Activated naive CD4-positive, alpha-beta T cell treated with anti-CD3 and anti-CD28 coated beads for 36 hours (primary cell): ENCODE measurements at regions of chr3 and their contacts with region 1.

Region 1: GRCh38 chr3:98329392-98330124 is 24.1 kb upstream of the OR5K4 start:
- DNase-seq: peak; percentile 57
- H3K4me3 Mint-ChIP-seq: no peak overlapping the region
- H3K27ac Mint-ChIP-seq: no peak overlapping the region
- H3K4me1 Mint-ChIP-seq: no peaks in the 10 kb centered on the region
- H3K27me3 Mint-ChIP-seq: peaks cover 16% of the 10 kb centered on the region

Region 2: GRCh38 chr3:98048586-98048985 is 281.0 kb before region 1 on chr3:
- CTCF ChIA-PET with region 1: interaction called, 15 read pairs
- intact Hi-C with region 1: no loop called
- DNase-seq: no peak
- H3K4me3 Mint-ChIP-seq: no peak overlapping the region
- H3K27ac Mint-ChIP-seq: no peak overlapping the region
- H3K4me1 Mint-ChIP-seq: no peaks in the 10 kb centered on the region
- H3K27me3 Mint-ChIP-seq: peaks cover 3% of the 10 kb centered on the region

Region 3: GRCh38 chr3:98188545-98188944 is 141.0 kb before region 1 on chr3:
- CTCF ChIA-PET with region 1: no interaction called
- intact Hi-C with region 1: loop called (anchors 1 kb)
- DNase-seq: no peak
- H3K4me3 Mint-ChIP-seq: no peak overlapping the region
- H3K27ac Mint-ChIP-seq: no peak overlapping the region
- H3K4me1 Mint-ChIP-seq: peaks cover 4% of the 10 kb centered on the region
- H3K27me3 Mint-ChIP-seq: peaks cover 6% of the 10 kb centered on the region

Region 4: GRCh38 chr3:98573181-98573728 is 243.7 kb after region 1 on chr3:
- CTCF ChIA-PET with region 1: interaction called, 4 read pairs
- intact Hi-C with region 1: loop called (anchors 1 kb)
- DNase-seq: no peak
- H3K4me3 Mint-ChIP-seq: no peak overlapping the region
- H3K27ac Mint-ChIP-seq: peak overlapping the region; percentile 47
- H3K4me1 Mint-ChIP-seq: peaks cover 19% of the 10 kb centered on the region
- H3K27me3 Mint-ChIP-seq: no peaks in the 10 kb centered on the region

Region 5: DNA sequence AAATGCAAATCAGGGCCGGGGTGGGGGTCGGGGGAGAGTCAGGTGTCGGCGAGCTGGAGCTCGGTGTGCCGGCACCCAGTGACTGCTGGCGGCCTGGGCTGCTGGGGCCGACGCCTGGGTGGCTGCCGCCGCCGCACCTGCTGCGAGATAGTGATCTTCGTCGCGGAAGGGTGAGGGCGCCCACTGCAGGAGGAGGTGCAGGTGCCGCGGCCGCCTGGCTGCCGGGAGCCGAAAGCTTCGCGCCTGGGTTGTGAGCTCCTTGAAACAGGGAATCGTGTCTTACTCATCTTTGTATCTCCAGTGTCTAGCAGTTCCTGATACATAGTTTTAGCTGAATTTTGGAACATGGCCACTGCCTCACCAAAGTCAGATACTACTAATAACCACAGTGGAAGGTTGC is 327.9 kb after region 1 on chr3:
- CTCF ChIA-PET with region 1: no interaction called
- intact Hi-C with region 1: loop called (anchors 5 kb)
- DNase-seq: peak; percentile 58
- H3K4me3 Mint-ChIP-seq: no peak overlapping the region
- H3K27ac Mint-ChIP-seq: no peak overlapping the region
- H3K4me1 Mint-ChIP-seq: peaks cover 3% of the 10 kb centered on the region
- H3K27me3 Mint-ChIP-seq: peaks cover 19% of the 10 kb centered on the region